OCI-LY7 (cell line): ENCODE measurements at regions of chr6 and their contacts with region 1.

Region 1: DNA sequence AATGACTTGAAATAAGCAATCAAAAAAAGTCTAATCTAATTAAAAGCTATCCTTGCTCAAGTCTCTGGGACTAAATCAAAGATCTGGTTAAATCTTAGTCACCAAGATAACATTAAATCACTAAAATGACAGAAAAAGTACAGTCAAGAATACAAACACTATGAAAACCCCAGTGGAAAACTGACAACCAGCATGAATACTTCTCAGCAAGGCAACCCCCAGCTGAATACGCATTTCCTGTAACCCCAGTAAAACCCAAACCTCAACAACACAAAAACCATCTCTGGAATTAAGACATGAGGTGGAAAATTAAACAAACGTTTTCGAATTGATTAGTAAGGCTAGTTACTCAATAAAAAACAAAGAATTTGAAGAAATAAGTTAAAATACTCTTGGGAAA is 23.7 kb upstream of the ZC3H12D start:
- DNase-seq: no peak
- H3K4me3 ChIP-seq: no peak overlapping the region
- H3K27ac ChIP-seq: no peak overlapping the region
- H3K4me1 ChIP-seq: no peaks in the 10 kb centered on the region
- CTCF ChIP-seq: no peak

Region 2: GRCh38 chr6:149484733-149485700 is 23.5 kb before region 1 on chr6 and contains the start of gene ZC3H12D:
- CTCF ChIA-PET with region 1: no interaction called
- POLR2A ChIA-PET with region 1: interaction called, 16 read pairs
- intact Hi-C with region 1: no loop called
- DNase-seq: peak; percentile 83
- H3K4me3 ChIP-seq: peak within 1 kb of the TSS; percentile 74
- H3K27ac ChIP-seq: peak within 1 kb of the TSS; percentile 99
- H3K4me1 ChIP-seq: peaks cover 52% of the 10 kb centered on the region
- CTCF ChIP-seq: peak; percentile 75
- total RNA-seq, gene ZC3H12D: 12.8 and 14.0 TPM in 2 replicates